ENCODE measurements at regions of chr1 and their contacts with region 1.

Region 1: GRCh38 chr1:39816415-39817090 is 27.9 kb upstream of the BMP8B start:
- ATAC-seq: peak; percentile 87 to 95 (median 92)
- H3K4me3 ChIP-seq: no peak overlapping the region
- H3K27ac ChIP-seq: no peak overlapping the region
- H3K4me1 ChIP-seq: peaks cover 0 to 5% of the 10 kb centered on the region in 2 donors

Region 2: GRCh38 chr1:39672551-39672947 is 144.0 kb before region 1 on chr1:
- in situ Hi-C with region 1: no loop called
- ATAC-seq: peak; percentile 42 to 73 (median 60)
- H3K4me3 ChIP-seq: peak overlapping the region in 4 of 5 donors; percentile 30 to 45 (median 36)
- H3K27ac ChIP-seq: no peak overlapping the region
- H3K4me1 ChIP-seq: peaks cover 5 to 6% of the 10 kb centered on the region in 2 donors

Region 3: DNA sequence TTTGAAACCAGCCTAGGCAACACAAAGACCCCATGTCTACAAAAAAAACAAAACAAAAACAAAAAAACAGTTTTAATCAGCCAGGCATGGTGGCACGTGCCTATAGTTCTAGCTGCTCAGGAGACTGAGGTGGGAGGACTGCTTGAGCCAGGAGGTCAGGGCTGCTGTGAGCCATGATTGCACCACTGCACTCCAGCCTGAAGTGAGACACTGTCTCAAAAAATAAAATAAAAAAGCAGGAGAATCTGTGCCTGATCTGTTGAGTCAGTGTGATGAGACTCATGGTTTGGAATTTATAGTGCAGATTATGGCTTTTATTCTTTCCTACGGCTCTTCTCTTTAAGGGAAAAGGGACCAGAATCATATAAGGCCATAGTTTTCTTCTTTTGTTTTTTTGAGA is 50.2 kb after region 1 on chr1:
- in situ Hi-C with region 1: no loop called
- ATAC-seq: no peak
- H3K4me3 ChIP-seq: no peak overlapping the region
- H3K27ac ChIP-seq: no peak overlapping the region
- H3K4me1 ChIP-seq: no peaks in the 10 kb centered on the region

Region 4: DNA sequence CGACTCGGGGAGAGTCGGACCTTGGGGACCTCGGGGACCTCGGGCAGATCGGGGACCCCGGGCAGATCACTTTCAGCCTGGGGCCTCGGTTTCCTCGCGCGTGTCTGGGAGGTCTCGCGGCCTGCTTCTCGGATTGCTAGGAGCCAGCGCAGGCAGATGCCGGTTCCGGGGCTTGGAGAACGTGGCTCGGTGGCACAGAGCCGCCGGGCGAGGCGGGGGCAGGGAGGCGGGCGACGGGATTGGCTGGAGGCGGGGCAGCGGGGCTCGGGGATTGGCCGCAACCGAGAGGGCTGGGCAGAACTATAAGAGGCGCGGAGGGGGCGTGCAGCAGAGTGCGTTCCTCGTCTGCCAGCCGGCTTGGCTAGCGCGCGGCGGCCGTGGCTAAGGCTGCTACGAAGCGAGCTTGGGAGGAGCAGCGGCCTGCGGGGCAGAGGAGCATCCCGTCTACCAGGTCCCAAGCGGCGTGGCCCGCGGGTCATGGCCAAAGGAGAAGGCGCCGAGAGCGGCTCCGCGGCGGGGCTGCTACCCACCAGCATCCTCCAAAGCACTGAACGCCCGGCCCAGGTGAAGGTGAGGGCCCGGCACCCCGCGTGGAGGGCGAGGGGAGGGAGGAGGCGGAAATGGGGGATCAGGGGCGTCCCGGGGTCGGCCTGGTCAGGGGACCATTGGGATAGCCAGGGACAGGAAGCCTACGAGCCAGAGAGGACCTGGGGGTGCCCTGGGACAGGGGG is 138.4 kb after region 1 on chr1 and contains the start of gene MFSD2A:
- in situ Hi-C with region 1: loop called in 3 of 9 experiments (anchors 10 to 25 kb)
- ATAC-seq: peak; percentile 89 to 95 (median 92)
- H3K4me3 ChIP-seq: peak within 1 kb of the TSS; percentile 52 to 66 (median 60)
- H3K27ac ChIP-seq: peak within 1 kb of the TSS; percentile 61 to 71
- H3K4me1 ChIP-seq: peaks cover 29 to 36% of the 10 kb centered on the region in 2 donors
- total RNA-seq, gene MFSD2A: 2.4 to 48.6 (median 25.8) TPM

Region 5: GRCh38 chr1:39973503-39974135 is 157.1 kb after region 1 on chr1:
- in situ Hi-C with region 1: loop called in 8 of 9 experiments (anchors 5 to 25 kb)
- ATAC-seq: peak; percentile 67 to 87 (median 83)
- H3K4me3 ChIP-seq: no peak overlapping the region
- H3K27ac ChIP-seq: no peak overlapping the region
- H3K4me1 ChIP-seq: no peaks in the 10 kb centered on the region

Region 6: GRCh38 chr1:39995973-39996393 is 179.4 kb after region 1 on chr1:
- in situ Hi-C with region 1: loop called in 2 of 9 experiments (anchors 25 kb)
- ATAC-seq: no peak
- H3K4me3 ChIP-seq: no peak overlapping the region
- H3K27ac ChIP-seq: no peak overlapping the region
- H3K4me1 ChIP-seq: no peaks in the 10 kb centered on the region

Region 7: GRCh38 chr1:40389871-40390560 is 573.5 kb after region 1 on chr1:
- in situ Hi-C with region 1: no loop called
- ATAC-seq: peak in 2 of 8 experiments; percentile 79 to 92
- H3K4me3 ChIP-seq: no peak overlapping the region
- H3K27ac ChIP-seq: no peak overlapping the region
- H3K4me1 ChIP-seq: peaks cover 0 to 14% of the 10 kb centered on the region in 2 donors

Measured in motor neuron (in vitro differentiated cells).